ENCODE measurements at regions of chr2 and their contacts with region 1.

Region 1: GRCh38 chr2:203225423-203226039 is 13.3 kb upstream of the CYP20A1 start:
- DNase-seq: peak; percentile 43
- H3K4me3 Mint-ChIP-seq: no peak overlapping the region
- H3K27ac Mint-ChIP-seq: no peak overlapping the region
- H3K4me1 Mint-ChIP-seq: no peaks in the 10 kb centered on the region
- H3K27me3 Mint-ChIP-seq: no peaks in the 10 kb centered on the region
- CTCF ChIP-seq: peak; percentile 76

Region 2: DNA sequence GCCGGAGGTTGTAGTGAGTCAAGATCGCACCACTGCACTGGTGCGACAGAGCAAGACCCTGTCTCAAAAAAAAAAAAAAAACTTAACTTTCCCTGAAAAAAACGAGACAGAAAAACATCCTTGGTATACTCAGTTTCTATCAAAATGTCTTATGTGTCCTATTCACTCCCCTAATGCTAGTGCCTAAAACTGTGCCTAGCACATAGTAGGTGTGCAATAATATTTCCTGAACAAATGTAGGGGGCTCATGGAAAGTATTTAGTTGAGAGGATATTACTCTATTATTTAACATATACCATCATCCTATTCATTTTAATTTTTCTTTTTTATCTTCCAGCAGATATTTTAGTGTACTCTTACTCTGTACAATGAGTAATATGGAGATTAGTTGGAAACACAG is 90.4 kb before region 1 on chr2:
- CTCF ChIA-PET with region 1: no interaction called
- intact Hi-C with region 1: no loop called
- DNase-seq: no peak
- H3K4me3 Mint-ChIP-seq: no peak overlapping the region
- H3K27ac Mint-ChIP-seq: no peak overlapping the region
- H3K4me1 Mint-ChIP-seq: no peaks in the 10 kb centered on the region
- H3K27me3 Mint-ChIP-seq: no peaks in the 10 kb centered on the region
- CTCF ChIP-seq: no peak

Region 3: DNA sequence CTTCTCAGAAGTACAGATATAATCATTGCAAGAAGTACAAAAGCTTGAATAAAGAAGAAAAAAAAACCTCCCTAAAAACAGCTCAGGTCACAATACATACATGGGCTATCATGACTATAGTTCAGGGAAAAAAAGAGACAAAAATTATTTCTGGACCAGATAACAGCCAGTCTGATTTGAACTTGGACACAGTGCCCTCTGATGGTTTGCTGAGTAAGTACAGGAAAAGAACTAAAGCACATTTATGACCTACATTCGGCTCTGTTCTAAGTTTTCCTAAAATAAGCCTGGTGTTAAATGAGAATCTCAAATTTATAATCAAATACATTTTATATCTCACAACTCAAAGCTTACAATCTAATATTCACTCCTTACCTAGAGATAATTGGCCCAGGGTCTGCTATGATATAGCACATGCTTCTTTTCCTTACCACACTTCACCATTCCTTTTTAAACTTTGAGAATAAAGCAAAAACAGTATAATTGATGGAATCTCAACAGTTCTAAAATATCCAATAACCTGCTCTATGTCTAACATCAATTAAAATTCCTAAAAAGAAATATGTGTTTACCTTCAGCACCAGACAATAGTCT is 228.4 kb after region 1 on chr2:
- CTCF ChIA-PET with region 1: no interaction called
- intact Hi-C with region 1: loop called (anchors 5 kb)
- DNase-seq: peak; percentile 46
- H3K4me3 Mint-ChIP-seq: no peak overlapping the region
- H3K27ac Mint-ChIP-seq: no peak overlapping the region
- H3K4me1 Mint-ChIP-seq: peaks cover 16% of the 10 kb centered on the region
- H3K27me3 Mint-ChIP-seq: no peaks in the 10 kb centered on the region
- CTCF ChIP-seq: peak; percentile 57

Region 4: GRCh38 chr2:203786549-203787351 is 561.2 kb after region 1 on chr2:
- CTCF ChIA-PET with region 1: no interaction called
- intact Hi-C with region 1: no loop called
- DNase-seq: no peak
- H3K4me3 Mint-ChIP-seq: no peak overlapping the region
- H3K27ac Mint-ChIP-seq: no peak overlapping the region
- H3K4me1 Mint-ChIP-seq: peaks cover 43% of the 10 kb centered on the region
- H3K27me3 Mint-ChIP-seq: no peaks in the 10 kb centered on the region
- CTCF ChIP-seq: no peak

Region 5: DNA sequence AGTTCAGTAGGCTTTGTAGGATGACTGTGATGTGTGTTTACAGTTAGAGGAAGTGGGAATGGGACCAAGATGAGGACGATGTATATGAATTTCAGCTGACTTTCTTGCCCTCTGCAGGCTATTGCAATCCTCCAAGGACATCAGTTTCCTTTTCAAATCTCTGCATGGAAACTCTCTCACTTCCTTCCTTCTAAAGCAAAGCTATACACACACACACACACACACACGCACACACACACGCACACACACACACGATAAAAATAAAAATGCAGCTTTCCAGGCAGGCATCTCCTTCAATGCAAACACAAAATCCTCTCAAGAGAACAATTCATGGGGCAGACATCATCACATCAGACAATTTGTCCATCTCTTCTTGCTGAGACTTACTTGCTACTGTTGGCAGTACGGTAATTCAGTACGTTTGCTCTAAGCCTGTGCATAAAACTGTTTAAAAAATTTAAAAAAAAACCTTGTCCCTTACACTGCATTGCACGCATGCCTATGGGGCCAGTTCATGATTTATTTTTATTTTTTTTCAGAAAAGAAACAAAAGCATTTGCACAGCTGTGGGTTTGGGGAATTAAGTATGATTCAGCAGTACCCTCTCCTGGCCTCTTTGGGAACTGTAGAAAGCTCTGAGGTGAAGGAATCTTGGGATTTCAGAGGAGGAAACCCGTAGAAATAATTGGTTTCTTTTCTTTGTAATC is 683.9 kb after region 1 on chr2:
- CTCF ChIA-PET with region 1: interaction called, 7 read pairs
- intact Hi-C with region 1: loop called (anchors 1 kb)
- DNase-seq: peak; percentile 54
- H3K4me3 Mint-ChIP-seq: no peak overlapping the region
- H3K27ac Mint-ChIP-seq: no peak overlapping the region
- H3K4me1 Mint-ChIP-seq: peaks cover 8% of the 10 kb centered on the region
- H3K27me3 Mint-ChIP-seq: no peaks in the 10 kb centered on the region
- CTCF ChIP-seq: peak; percentile 70

Measured in Calu3 (cell line).